HCT116 (cell line): ENCODE measurements at regions of chr12 and their contacts with region 1.

Region 1: GRCh38 chr12:40336573-40337199 is 111.9 kb downstream of the LRRK2 start:
- DNase-seq: no peak
- ATAC-seq: peak; percentile 76
- H3K4me3 ChIP-seq: no peak overlapping the region
- H3K27ac ChIP-seq: no peak overlapping the region
- H3K4me1 ChIP-seq: no peaks in the 10 kb centered on the region
- H3K27me3 ChIP-seq: no peaks in the 10 kb centered on the region
- CTCF ChIP-seq: peak; percentile 40 to 65 (median 54); a peak in 5 of 6 replicates
- POLR2A ChIP-seq: no peak
- RAD21 ChIP-seq: peak; percentile 51

Region 2: DNA sequence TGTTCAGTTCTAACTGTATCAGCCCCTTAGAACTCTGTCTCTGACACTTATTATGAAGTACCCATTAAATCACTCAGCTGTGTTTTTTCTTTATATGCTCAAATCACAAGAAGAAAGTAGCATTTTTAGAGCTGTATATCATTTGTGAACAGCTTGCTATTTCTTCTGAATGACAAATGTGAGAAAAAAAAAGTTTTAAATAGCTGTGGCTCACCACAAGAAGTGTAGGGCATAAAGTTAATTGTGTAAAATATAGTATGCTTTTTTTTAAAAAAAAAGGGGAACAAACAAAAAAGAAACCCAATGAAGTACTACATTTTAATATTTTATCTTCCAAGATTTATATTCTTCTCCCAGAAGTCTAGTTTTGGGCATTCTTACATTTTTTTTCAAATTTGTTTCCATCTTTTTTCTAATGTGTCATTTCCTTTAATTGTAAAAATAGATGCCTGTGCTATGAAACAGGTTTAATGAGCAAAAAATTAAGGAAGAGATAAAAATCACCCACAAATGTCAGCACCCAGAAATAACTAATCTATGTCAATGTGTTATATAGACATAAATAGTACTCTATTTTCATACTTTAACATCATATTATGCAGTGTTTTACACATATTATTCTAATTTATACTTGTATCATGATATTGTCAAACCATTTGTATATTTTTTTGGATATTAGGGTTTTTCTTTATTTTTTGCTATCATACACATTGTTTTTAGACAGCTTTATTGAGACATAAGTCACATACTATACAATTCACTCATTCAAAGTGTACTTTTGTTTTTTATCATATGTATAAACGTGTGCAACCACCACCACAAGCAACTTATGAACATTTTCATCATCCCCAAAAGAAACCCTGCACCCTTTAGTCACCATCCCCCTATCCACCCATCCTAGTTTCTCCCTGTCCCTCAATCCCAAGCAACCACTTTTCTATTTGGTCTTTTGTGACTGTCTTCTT is 134.3 kb before region 1 on chr12:
- CTCF ChIA-PET with region 1: no interaction called
- POLR2A ChIA-PET with region 1: no interaction called
- RAD21 ChIA-PET with region 1: no interaction called
- intact Hi-C with region 1: no loop called
- DNase-seq: no peak
- ATAC-seq: no peak
- H3K4me3 ChIP-seq: no peak overlapping the region
- H3K27ac ChIP-seq: no peak overlapping the region
- H3K4me1 ChIP-seq: no peaks in the 10 kb centered on the region
- H3K27me3 ChIP-seq: no peaks in the 10 kb centered on the region
- CTCF ChIP-seq: no peak
- POLR2A ChIP-seq: no peak
- RAD21 ChIP-seq: no peak

Region 3: DNA sequence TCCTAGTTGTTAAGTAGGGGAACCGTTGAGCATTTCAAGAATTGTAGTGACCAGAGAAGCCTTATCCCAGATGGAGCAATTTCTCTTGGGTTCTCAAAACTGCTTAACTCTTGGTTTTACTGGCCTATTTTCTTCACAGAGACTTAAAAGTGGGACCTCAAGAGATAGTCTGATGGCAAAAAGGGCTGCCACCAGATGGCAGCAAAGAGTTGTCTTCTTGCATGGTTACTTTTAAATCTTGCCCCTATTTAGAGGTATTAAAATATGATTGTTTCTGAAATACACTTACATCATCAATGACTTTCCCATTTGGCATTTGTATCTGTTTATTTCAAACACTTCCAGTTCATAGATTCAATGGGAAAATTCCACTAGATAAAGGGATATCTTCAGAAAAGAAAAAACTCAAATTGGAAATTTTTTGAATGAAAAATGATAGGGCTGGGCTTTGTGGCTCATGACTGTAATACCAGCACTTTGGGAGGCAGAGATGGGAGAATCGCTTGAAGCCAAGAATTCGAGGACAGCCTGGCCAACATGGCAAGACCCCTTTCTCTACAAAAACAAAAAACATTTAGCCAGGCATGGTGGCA is 285.7 kb after region 1 on chr12:
- CTCF ChIA-PET with region 1: no interaction called
- POLR2A ChIA-PET with region 1: no interaction called
- RAD21 ChIA-PET with region 1: no interaction called
- intact Hi-C with region 1: loop called (anchors 5 kb)
- DNase-seq: peak; percentile 50
- ATAC-seq: peak; percentile 67
- H3K4me3 ChIP-seq: no peak overlapping the region
- H3K27ac ChIP-seq: no peak overlapping the region
- H3K4me1 ChIP-seq: no peaks in the 10 kb centered on the region
- H3K27me3 ChIP-seq: no peaks in the 10 kb centered on the region
- CTCF ChIP-seq: peak; percentile 41 to 85 (median 74); a peak in 5 of 6 replicates
- POLR2A ChIP-seq: no peak
- RAD21 ChIP-seq: peak; percentile 76